ENCODE measurements at regions of chr5 and their contacts with region 1.

Region 1: DNA sequence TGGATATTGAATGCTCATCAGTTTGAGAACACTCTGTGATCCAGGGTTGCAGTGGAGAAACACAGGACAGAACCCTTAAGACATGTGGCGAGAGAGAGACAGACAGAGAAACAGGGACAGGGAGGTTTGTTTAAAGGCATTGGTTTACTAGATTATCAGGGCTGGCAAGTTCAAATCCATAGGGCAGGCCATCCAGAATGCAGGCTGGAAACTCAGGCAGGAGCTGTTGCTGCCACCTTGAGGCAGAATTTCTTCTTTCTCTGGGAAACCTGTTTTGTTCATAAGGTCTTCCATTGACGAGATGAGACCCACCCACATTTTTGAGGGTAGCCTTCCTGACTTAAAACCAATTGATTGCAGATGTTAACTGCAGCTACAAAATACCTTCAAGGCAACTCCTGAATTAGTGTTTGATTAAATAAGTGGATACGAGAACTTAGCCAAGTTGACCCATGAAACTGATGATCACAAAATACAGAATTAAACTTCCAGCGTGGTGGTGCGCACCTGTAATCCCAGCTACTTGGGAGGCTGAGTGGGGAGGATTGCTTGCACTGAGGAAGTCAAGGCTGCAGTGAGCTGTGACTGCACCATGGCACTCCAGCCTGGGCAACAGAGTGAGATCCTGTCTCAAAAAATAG is 55.9 kb downstream of the NSUN2 start:
- DNase-seq: peak; percentile 50 to 51
- H3K4me3 ChIP-seq: no peak overlapping the region
- H3K27ac ChIP-seq: no peak overlapping the region
- H3K4me1 ChIP-seq: no peaks in the 10 kb centered on the region
- H3K27me3 ChIP-seq: peaks cover 86% of the 10 kb centered on the region
- CTCF ChIP-seq: peak; percentile 82

Region 2: DNA sequence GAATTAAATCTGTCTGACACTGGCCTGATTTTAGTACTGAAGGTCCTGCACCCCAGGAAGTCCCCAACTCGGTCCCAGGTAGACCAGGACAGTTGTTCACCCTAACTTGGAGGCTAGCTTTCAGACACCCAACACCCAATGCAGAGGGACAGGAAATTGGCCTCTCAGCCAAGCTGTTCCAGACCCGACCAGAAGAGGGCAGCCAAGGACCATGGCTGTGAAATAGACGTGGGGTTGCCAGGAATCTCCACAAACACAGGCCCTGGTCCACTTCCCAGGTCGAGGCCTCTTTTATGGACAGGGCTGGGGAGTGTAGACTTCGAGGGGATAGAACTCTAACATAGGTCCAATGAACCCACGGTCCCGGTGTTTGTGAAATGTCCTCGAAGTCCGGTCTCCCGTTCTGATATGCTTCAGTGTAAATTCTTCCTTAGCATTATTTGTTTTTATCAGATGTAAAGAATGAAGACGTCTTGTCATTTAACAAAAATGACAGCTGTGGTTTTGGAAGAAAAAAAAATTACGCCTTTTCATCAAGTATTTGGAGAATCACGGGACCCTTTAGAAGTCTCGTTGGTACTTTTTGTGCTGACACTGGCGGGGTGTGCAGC is 1697.2 kb before region 1 on chr5:
- CTCF ChIA-PET with region 1: no interaction called
- POLR2A ChIA-PET with region 1: no interaction called
- intact Hi-C with region 1: loop called (anchors 1 kb)
- DNase-seq: peak; percentile 62 to 90
- H3K4me3 ChIP-seq: no peak overlapping the region
- H3K27ac ChIP-seq: no peak overlapping the region
- H3K4me1 ChIP-seq: no peaks in the 10 kb centered on the region
- H3K27me3 ChIP-seq: peaks cover 95% of the 10 kb centered on the region
- CTCF ChIP-seq: peak; percentile 98

Region 3: DNA sequence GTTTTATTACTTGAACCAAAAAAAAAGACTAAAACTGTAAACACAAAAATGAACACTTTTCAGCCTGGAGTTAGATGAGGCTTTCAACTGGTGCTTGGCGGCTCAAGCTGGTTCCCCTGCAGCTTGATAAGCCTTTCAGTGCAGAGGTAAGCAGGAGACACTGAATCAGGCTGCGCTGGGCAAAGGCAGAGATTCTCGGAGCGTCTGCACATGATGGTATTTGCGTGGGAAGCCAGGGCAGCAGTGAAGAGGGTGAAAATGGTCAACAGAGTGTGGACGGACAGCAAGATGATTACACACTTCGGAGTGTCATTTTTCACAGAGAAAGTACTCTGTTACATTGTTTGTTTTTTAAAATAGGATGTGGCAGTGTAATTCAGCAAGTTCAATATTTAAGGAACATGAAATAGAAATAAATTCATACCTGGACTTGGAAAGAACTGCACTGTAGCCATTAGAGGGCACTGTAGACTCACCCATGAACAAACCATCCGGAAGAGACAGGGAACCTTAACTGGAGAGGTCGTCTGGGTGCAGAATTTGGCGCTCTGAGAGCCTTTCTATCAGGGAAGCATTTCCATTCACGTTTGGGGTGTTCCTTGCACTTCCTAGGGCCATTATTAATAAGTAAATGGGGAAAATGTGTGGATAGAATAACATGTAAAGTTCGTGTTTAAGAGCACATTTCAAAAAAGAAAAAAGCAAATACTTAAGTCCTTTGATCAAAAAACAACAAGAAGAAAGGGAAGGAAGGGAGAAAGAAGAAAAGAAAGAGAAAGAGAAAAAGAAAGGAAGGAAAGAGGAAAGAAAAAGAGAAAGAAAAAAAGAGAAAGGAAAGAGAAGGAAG is 1084.7 kb before region 1 on chr5:
- CTCF ChIA-PET with region 1: no interaction called
- POLR2A ChIA-PET with region 1: no interaction called
- intact Hi-C with region 1: loop called (anchors 1 kb)
- DNase-seq: peak; percentile 53 to 68
- H3K4me3 ChIP-seq: no peak overlapping the region
- H3K27ac ChIP-seq: no peak overlapping the region
- H3K4me1 ChIP-seq: no peaks in the 10 kb centered on the region
- H3K27me3 ChIP-seq: no peaks in the 10 kb centered on the region
- CTCF ChIP-seq: peak; percentile 91

Region 4: GRCh38 chr5:5886812-5887486 is 690.0 kb before region 1 on chr5:
- CTCF ChIA-PET with region 1: no interaction called
- POLR2A ChIA-PET with region 1: no interaction called
- intact Hi-C with region 1: loop called (anchors 1 kb)
- DNase-seq: peak in 1 of 2 experiments; percentile 52
- H3K4me3 ChIP-seq: no peak overlapping the region
- H3K27ac ChIP-seq: no peak overlapping the region
- H3K4me1 ChIP-seq: no peaks in the 10 kb centered on the region
- H3K27me3 ChIP-seq: peaks cover 11% of the 10 kb centered on the region
- CTCF ChIP-seq: peak; percentile 76

Region 5: GRCh38 chr5:6135977-6136376 is 441.0 kb before region 1 on chr5:
- CTCF ChIA-PET with region 1: no interaction called
- POLR2A ChIA-PET with region 1: no interaction called
- intact Hi-C with region 1: no loop called
- DNase-seq: no peak
- H3K4me3 ChIP-seq: no peak overlapping the region
- H3K27ac ChIP-seq: no peak overlapping the region
- H3K4me1 ChIP-seq: no peaks in the 10 kb centered on the region
- H3K27me3 ChIP-seq: peaks cover 9% of the 10 kb centered on the region; the same call in 1 of the 2 replicates
- CTCF ChIP-seq: no peak

Region 6: GRCh38 chr5:6291961-6292360 is 285.0 kb before region 1 on chr5:
- CTCF ChIA-PET with region 1: no interaction called
- POLR2A ChIA-PET with region 1: no interaction called
- intact Hi-C with region 1: loop called (anchors 1 kb)
- DNase-seq: no peak
- H3K4me3 ChIP-seq: no peak overlapping the region
- H3K27ac ChIP-seq: no peak overlapping the region
- H3K4me1 ChIP-seq: no peaks in the 10 kb centered on the region
- H3K27me3 ChIP-seq: peaks cover 11% of the 10 kb centered on the region; the same call in 1 of the 2 replicates
- CTCF ChIP-seq: peak; percentile 59